GM12878 (cell line): ENCODE measurements at regions of chr1 and their contacts with region 1.

Region 1: GRCh38 chr1:180252638-180253536 is 22.8 kb downstream of the LHX4 start:
- DNase-seq: peak; percentile 37
- ATAC-seq: peak; percentile 90
- H3K4me3 ChIP-seq: no peak overlapping the region
- H3K27ac ChIP-seq: no peak overlapping the region
- H3K4me1 ChIP-seq: no peaks in the 10 kb centered on the region; the same call in 1 of the 2 replicates
- H3K27me3 ChIP-seq: no peaks in the 10 kb centered on the region
- CTCF ChIP-seq: peak; percentile 87 to 92 (median 92)
- EP300 ChIP-seq: no peak
- POLR2A ChIP-seq: no peak
- RAD21 ChIP-seq: peak; percentile 86

Region 2: GRCh38 chr1:180188091-180188506 is 64.8 kb before region 1 on chr1:
- CTCF ChIA-PET with region 1: interaction called, 12 read pairs
- POLR2A ChIA-PET with region 1: no interaction called
- RAD21 ChIA-PET with region 1: no interaction called
- SMC1A ChIA-PET with region 1: interaction called, 7 read pairs
- in situ Hi-C with region 1: no loop called
- intact Hi-C with region 1: no loop called
- DNase-seq: no peak
- ATAC-seq: peak; percentile 81
- H3K4me3 ChIP-seq: no peak overlapping the region
- H3K27ac ChIP-seq: no peak overlapping the region
- H3K4me1 ChIP-seq: no peaks in the 10 kb centered on the region
- H3K27me3 ChIP-seq: no peaks in the 10 kb centered on the region
- CTCF ChIP-seq: peak; percentile 51 to 65 (median 54); a peak in 5 of 6 replicates
- EP300 ChIP-seq: no peak
- POLR2A ChIP-seq: no peak
- RAD21 ChIP-seq: peak; percentile 73

Region 3: DNA sequence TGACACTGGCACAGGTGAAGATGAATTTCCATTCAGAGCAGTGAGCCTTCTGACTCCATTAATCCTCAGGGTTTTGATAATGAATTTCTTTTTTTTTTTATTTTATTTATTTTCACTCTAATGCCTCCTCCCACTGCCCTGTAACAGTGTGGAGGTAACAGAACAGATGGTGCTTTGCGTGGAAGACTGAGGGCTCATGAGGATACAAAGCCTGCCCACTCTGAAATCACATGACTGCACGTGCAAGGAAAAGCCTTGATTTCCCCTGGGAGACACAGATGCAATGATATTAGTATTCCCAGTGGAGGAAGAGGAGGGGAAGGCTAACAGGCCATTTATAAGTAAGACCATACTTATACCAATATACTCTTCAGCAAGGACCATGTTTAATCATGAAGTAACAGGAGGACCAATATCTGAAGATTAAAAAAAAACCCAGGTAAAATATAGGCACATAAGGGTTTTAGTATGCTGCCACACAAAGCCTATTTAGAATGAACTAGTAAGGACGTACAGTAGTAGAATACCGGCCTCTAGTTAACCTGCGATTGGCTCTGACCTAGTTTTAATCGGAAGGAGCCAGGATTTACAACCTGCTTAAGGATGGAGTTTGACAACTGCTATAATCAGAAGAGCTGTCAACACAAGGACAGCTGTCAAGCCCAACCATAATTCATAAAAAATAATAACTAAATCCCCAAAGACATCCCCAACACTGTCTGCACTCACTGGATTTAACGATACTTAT is 46.8 kb after region 1 on chr1:
- CTCF ChIA-PET with region 1: no interaction called
- POLR2A ChIA-PET with region 1: no interaction called
- RAD21 ChIA-PET with region 1: interaction called, 5 read pairs
- SMC1A ChIA-PET with region 1: no interaction called
- in situ Hi-C with region 1: loop called (anchors 5 kb)
- intact Hi-C with region 1: no loop called
- DNase-seq: no peak
- ATAC-seq: no peak
- H3K4me3 ChIP-seq: no peak overlapping the region
- H3K27ac ChIP-seq: no peak overlapping the region
- H3K4me1 ChIP-seq: no peaks in the 10 kb centered on the region
- H3K27me3 ChIP-seq: no peaks in the 10 kb centered on the region
- CTCF ChIP-seq: no peak
- EP300 ChIP-seq: no peak
- POLR2A ChIP-seq: no peak
- RAD21 ChIP-seq: no peak

Region 4: DNA sequence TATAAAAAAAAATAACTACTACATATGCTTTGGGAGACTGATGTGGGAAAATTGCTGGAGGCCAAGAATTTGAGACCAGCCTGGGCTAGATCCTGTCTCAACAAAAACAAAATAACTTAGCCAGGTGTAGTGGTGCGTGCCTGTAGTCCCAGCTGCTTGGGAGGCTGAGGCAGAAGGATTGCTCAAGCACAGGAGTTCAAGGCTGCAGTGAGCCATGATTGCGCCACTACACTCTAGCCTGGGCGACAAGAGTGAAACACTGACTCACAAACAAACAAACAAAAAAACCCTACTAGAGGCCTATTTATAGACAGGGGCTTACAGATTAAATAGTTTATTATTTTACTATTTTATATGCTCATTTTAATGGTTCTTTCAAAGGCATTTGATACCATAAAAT is 57.2 kb after region 1 on chr1:
- CTCF ChIA-PET with region 1: interaction called, 6 read pairs
- POLR2A ChIA-PET with region 1: no interaction called
- RAD21 ChIA-PET with region 1: no interaction called
- SMC1A ChIA-PET with region 1: interaction called, 10 read pairs
- in situ Hi-C with region 1: no loop called
- intact Hi-C with region 1: no loop called
- DNase-seq: no peak
- ATAC-seq: no peak
- H3K4me3 ChIP-seq: no peak overlapping the region
- H3K27ac ChIP-seq: no peak overlapping the region
- H3K4me1 ChIP-seq: no peaks in the 10 kb centered on the region
- H3K27me3 ChIP-seq: no peaks in the 10 kb centered on the region
- CTCF ChIP-seq: no peak
- EP300 ChIP-seq: no peak
- POLR2A ChIP-seq: no peak
- RAD21 ChIP-seq: no peak

Region 5: GRCh38 chr1:180365039-180365438 is 112.2 kb after region 1 on chr1:
- CTCF ChIA-PET with region 1: interaction called, 15 read pairs
- POLR2A ChIA-PET with region 1: no interaction called
- RAD21 ChIA-PET with region 1: no interaction called
- SMC1A ChIA-PET with region 1: no interaction called
- in situ Hi-C with region 1: no loop called
- intact Hi-C with region 1: no loop called
- DNase-seq: no peak
- ATAC-seq: peak; percentile 61; the same call in 2 of the 3 replicates
- H3K4me3 ChIP-seq: no peak overlapping the region
- H3K27ac ChIP-seq: no peak overlapping the region
- H3K4me1 ChIP-seq: no peaks in the 10 kb centered on the region
- H3K27me3 ChIP-seq: no peaks in the 10 kb centered on the region
- CTCF ChIP-seq: peak; percentile 26 to 46 (median 36); a peak in 5 of 6 replicates
- EP300 ChIP-seq: no peak
- POLR2A ChIP-seq: no peak
- RAD21 ChIP-seq: peak; percentile 29

Region 6: GRCh38 chr1:180415985-180416633 is 163.2 kb after region 1 on chr1:
- CTCF ChIA-PET with region 1: interaction called, 54 read pairs
- POLR2A ChIA-PET with region 1: no interaction called
- RAD21 ChIA-PET with region 1: interaction called, 16 read pairs
- SMC1A ChIA-PET with region 1: interaction called, 16 read pairs
- in situ Hi-C with region 1: no loop called
- intact Hi-C with region 1: loop called (anchors 1 kb)
- DNase-seq: peak; percentile 4
- ATAC-seq: peak; percentile 69
- H3K4me3 ChIP-seq: no peak overlapping the region
- H3K27ac ChIP-seq: no peak overlapping the region
- H3K4me1 ChIP-seq: no peaks in the 10 kb centered on the region
- H3K27me3 ChIP-seq: no peaks in the 10 kb centered on the region
- CTCF ChIP-seq: peak in 2 of 3 experiments; percentile 38 to 42; a peak in 3 of 6 replicates
- EP300 ChIP-seq: no peak
- POLR2A ChIP-seq: no peak
- RAD21 ChIP-seq: peak; percentile 45

Region 7: DNA sequence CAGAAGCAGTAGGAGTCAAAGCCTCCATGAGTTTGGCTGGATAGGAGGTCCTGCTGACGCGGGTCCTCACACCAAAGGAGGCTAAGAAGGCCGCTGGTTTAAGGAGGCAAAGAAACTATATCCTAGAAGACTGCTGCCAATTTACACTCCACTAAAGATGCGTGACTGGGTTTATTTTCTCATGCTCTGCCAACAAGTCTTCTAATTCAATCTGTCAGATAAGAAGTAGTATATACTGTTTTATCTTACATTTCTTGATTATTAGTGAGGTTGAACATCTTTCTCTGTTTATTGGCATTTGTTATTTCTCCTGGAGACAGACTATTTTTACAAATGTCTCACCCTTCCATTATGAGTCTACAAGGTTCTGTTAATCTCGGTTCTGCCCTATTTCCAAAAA is 215.4 kb after region 1 on chr1:
- CTCF ChIA-PET with region 1: interaction called, 14 read pairs
- POLR2A ChIA-PET with region 1: no interaction called
- RAD21 ChIA-PET with region 1: no interaction called
- SMC1A ChIA-PET with region 1: interaction called, 4 read pairs
- in situ Hi-C with region 1: no loop called
- intact Hi-C with region 1: no loop called
- DNase-seq: no peak
- ATAC-seq: no peak
- H3K4me3 ChIP-seq: no peak overlapping the region
- H3K27ac ChIP-seq: no peak overlapping the region
- H3K4me1 ChIP-seq: no peaks in the 10 kb centered on the region
- H3K27me3 ChIP-seq: no peaks in the 10 kb centered on the region
- CTCF ChIP-seq: no peak
- EP300 ChIP-seq: no peak
- POLR2A ChIP-seq: no peak
- RAD21 ChIP-seq: no peak